Activated B cell treated with CpG ODN at 0.5 μM for 24 hours (primary cell): ENCODE measurements at regions of chr1 and their contacts with region 1.

Region 1: GRCh38 chr1:221203224-221204054 is 324.2 kb downstream of the HLX start:
- DNase-seq: peak; percentile 59
- ATAC-seq: peak; percentile 45
- H3K4me3 Mint-ChIP-seq: no peak overlapping the region
- H3K27ac Mint-ChIP-seq: no peak overlapping the region
- H3K4me1 Mint-ChIP-seq: peaks cover 3% of the 10 kb centered on the region
- H3K27me3 Mint-ChIP-seq: peaks cover 7% of the 10 kb centered on the region
- CTCF ChIP-seq: no peak

Region 2: DNA sequence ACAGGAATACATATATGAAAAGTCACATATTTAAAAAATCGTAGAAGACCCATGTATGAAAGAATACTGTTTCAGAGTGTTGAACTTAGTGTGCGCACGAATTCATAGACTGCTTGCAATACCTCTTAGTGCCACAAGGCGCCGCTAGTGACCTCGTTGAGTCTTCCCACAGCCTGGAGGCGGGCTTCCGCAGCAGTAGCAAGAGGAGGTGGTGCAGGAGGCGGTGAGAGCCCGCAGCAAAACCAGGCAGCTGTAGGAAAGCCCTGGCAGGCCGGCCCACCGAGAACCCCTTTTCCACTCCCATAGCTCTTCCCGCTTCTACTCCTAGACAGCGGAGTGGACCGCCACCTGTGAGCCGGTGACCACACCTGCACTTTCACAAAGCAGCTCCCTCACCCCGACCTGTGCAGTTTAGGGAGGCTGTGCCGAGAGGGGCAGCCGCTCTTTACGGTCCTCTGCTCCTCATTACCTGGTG is 393.2 kb before region 1 on chr1:
- CTCF ChIA-PET with region 1: interaction called, 27 read pairs
- POLR2A ChIA-PET with region 1: no interaction called
- intact Hi-C with region 1: loop called (anchors 1 kb)
- DNase-seq: peak; percentile 54
- ATAC-seq: peak; percentile 99
- H3K4me3 Mint-ChIP-seq: peak overlapping the region; percentile 55
- H3K27ac Mint-ChIP-seq: no peak overlapping the region
- H3K4me1 Mint-ChIP-seq: peaks cover 2% of the 10 kb centered on the region
- H3K27me3 Mint-ChIP-seq: peaks cover 4% of the 10 kb centered on the region
- CTCF ChIP-seq: peak; percentile 96

Region 3: GRCh38 chr1:220908757-220909156 is 294.7 kb before region 1 on chr1:
- CTCF ChIA-PET with region 1: interaction called, 64 read pairs
- POLR2A ChIA-PET with region 1: no interaction called
- intact Hi-C with region 1: loop called (anchors 1 kb)
- DNase-seq: no peak
- ATAC-seq: peak; percentile 52
- H3K4me3 Mint-ChIP-seq: no peak overlapping the region
- H3K27ac Mint-ChIP-seq: no peak overlapping the region
- H3K4me1 Mint-ChIP-seq: peaks cover 10% of the 10 kb centered on the region
- H3K27me3 Mint-ChIP-seq: peaks cover 9% of the 10 kb centered on the region
- CTCF ChIP-seq: no peak

Region 4: GRCh38 chr1:221187174-221187573 is 16.3 kb before region 1 on chr1:
- CTCF ChIA-PET with region 1: no interaction called
- POLR2A ChIA-PET with region 1: no interaction called
- intact Hi-C with region 1: no loop called
- DNase-seq: no peak
- ATAC-seq: no peak
- H3K4me3 Mint-ChIP-seq: no peak overlapping the region
- H3K27ac Mint-ChIP-seq: no peak overlapping the region
- H3K4me1 Mint-ChIP-seq: no peaks in the 10 kb centered on the region
- H3K27me3 Mint-ChIP-seq: peaks cover 9% of the 10 kb centered on the region
- CTCF ChIP-seq: no peak

Region 5: GRCh38 chr1:221335161-221336101 is 132.0 kb after region 1 on chr1:
- CTCF ChIA-PET with region 1: no interaction called
- POLR2A ChIA-PET with region 1: no interaction called
- intact Hi-C with region 1: no loop called
- DNase-seq: no peak
- ATAC-seq: no peak
- H3K4me3 Mint-ChIP-seq: no peak overlapping the region
- H3K27ac Mint-ChIP-seq: no peak overlapping the region
- H3K4me1 Mint-ChIP-seq: no peaks in the 10 kb centered on the region
- H3K27me3 Mint-ChIP-seq: peaks cover 4% of the 10 kb centered on the region
- CTCF ChIP-seq: no peak